Cardiac septum (tissue), 1 donor: ENCODE measurements at regions of chr2 and their contacts with region 1.

Region 1: DNA sequence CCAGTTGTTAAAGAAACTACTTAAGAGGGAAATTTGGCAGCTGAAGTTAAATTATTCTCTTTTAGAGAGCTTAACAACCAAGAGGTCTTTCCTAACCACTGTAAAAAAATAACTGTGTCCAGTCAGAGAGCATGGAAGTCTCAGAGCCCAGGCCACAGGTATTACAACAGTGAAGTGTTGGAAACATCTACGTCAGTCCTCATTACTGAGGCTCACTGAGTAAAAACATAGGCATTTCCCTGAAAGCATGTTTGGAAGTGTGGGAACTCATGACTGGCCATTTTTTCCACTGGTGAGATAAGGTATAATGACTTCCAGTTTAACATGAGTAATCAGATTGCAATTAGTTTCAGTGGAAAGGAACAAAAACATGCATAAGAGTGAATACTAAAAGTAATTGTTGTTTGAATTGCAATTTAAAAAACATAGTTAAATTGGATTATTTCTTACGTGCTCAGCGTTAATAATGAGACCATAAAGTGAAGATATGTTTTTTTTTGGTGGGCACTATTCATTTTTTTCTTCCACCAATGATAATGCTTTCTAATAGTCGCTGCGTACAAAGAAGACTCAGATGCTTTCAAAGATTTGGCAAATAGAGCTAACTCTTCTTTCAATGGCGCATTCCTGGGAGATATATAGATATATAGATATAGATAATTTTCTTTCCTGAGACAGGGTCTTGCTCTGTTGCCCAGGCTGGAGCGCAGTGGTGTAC is 60.8 kb downstream of the EFEMP1 start:
- DNase-seq: no peak

Region 2: DNA sequence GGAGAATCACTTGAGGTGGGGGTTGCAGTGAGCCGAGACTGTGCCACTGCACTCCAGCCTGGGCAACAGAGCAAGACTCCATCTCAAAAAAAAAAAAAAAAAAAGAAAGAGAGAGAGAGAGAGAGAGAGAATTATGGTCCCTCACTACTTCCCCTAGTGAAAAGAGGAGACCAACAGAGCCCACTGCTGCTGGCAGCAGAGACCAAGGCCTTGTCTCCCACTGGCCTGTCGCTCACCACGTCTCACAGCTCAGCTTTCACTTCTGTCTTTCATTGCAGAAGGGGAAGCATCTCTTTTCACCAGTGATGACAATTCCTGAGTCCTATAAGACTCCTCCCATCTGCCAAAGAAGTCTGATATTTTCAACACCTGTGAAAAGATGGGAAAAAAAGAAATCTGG is 712.0 kb before region 1 on chr2:
- intact Hi-C with region 1: no loop called
- DNase-seq: no peak

Region 3: DNA sequence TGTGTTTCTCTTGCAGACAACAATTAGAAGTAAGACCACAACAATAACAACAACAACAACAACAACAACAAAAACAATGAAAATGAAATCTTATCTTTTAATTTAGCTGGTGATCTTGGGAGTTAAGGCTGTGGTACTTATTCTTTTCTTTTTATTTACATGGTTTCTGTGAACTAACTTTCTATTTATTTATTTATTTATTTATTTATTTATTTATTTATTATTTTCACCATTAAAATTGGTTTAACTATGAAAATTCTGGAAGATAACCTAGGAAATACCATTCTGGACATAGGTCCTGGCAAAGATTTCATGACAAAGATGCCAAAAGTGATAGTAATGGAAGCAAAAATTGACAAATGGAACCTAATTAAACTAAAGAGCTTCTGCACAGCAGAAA is 66.7 kb before region 1 on chr2:
- intact Hi-C with region 1: no loop called
- DNase-seq: no peak

Region 4: DNA sequence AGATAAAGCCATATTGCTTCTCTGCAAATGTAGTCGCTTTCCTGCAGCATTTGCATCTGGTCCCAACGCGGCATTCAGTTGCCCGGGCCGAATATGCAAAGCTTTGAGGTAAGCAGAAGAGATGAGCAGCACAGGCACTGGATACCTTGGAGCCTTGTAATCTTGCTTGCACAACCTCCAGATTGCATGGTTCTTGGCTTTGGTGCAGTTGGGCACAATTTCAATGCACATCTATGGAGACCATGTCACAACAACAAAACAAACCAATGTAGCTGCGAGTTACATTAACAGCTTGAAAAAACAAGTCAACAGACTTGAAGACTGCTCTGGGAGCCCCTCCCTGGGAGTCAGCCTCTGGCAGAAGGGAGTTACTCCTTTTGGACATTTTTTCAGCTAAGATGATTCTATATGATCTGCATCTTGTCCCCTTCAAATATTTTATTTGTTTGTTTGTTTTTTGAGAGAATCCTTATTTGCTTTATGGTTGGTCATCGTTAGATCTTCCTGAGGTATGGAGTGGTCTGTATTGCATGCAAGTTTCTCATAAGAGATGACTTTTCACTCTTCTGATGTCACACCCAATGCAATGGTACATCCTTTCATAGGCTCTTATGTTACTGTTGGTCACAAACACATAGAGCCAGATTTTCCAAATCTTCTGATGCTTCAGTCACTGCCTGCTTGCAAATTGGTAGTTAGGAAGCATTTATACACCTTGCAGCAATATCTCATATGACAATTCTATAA is 52.8 kb before region 1 on chr2:
- intact Hi-C with region 1: loop called (anchors 5 kb)
- DNase-seq: no peak

Region 5: DNA sequence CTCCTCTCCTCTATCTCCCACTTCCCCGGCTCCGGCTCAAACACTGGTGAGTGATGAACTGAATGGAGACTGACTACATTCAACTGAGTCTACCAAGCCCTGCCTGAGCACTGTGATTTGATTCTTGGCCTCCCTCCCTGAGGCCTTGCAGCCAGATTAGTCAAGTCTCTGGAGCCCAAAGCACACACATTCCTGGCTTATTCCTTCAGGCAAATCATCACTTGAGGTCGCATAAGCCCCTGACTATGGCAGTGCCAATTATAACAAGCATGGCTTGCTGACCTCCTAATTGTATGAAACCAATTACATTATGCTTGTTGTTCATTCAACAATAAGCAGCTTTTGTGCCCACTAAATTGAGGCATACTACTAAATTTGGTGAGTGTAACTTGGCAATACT is 26.1 kb after region 1 on chr2:
- intact Hi-C with region 1: no loop called
- DNase-seq: no peak

Region 6: DNA sequence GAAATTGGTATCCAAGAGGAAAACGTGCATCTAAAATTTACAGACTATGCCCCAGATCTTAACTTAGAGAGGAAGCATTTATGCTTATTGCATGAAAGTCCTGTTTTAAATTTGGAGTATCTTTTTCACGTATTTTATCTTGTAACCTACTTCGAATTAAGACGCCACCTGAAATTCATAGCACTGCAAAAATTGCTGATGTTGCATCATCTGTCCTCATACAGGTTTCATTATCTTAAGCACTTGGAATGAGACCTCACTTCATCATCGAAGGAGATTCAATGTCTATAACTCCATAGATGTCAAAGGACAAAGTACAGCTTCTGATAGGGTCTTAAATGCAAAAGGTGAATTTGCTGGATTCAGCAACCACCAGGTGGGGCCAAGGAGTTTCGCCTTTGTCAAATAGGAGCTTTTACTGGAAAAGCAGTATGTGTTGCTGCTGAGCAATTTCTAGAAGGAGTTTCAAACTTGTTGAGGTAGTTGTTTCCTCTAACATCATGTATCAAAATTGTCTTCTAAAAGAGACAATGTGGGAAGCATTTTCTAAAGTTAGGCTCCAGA is 214.6 kb after region 1 on chr2:
- intact Hi-C with region 1: no loop called
- DNase-seq: no peak